H1 (cell line): ENCODE measurements at regions of chr14 and their contacts with region 1.

Region 1: GRCh38 chr14:73198253-73198652 is 39.1 kb upstream of the PAPLN start:
- DNase-seq: no peak
- H3K4me3 ChIP-seq: no peak overlapping the region
- H3K27ac ChIP-seq: no peak overlapping the region
- H3K4me1 ChIP-seq: peaks cover 5 to 7% (median 7%) of the 10 kb centered on the region in 4 experiments
- H3K27me3 ChIP-seq: no peaks in the 10 kb centered on the region
- CTCF ChIP-seq: no peak
- EP300 ChIP-seq: no peak
- POLR2A ChIP-seq: no peak
- RAD21 ChIP-seq: no peak

Region 2: GRCh38 chr14:73216030-73216429 is 17.8 kb after region 1 on chr14:
- CTCF ChIA-PET with region 1: interaction called, 11 read pairs
- POLR2A ChIA-PET with region 1: interaction called, 7 read pairs
- DNase-seq: no peak
- H3K4me3 ChIP-seq: no peak overlapping the region
- H3K27ac ChIP-seq: no peak overlapping the region
- H3K4me1 ChIP-seq: no peaks in the 10 kb centered on the region
- H3K27me3 ChIP-seq: no peaks in the 10 kb centered on the region
- CTCF ChIP-seq: no peak
- EP300 ChIP-seq: no peak
- POLR2A ChIP-seq: no peak
- RAD21 ChIP-seq: no peak